Right lobe of liver (tissue), 6 donors: ENCODE measurements at regions of chr21 and their contacts with region 1.

Region 1: GRCh38 chr21:31180256-31181081 is 142.2 kb upstream of the KRTAP19-8 start:
- DNase-seq: no peak
- ATAC-seq: peak; percentile 67 to 79 (median 70)
- H3K4me3 ChIP-seq: no peak overlapping the region
- H3K27ac ChIP-seq: no peak overlapping the region
- H3K4me1 ChIP-seq: no peaks in the 10 kb centered on the region
- H3K27me3 ChIP-seq: no peaks in the 10 kb centered on the region
- CTCF ChIP-seq: peak; percentile 55 to 66 (median 62)
- POLR2A ChIP-seq: no peak

Region 2: GRCh38 chr21:31098576-31099005 is 81.9 kb before region 1 on chr21:
- intact Hi-C with region 1: loop called in 1 of 2 experiments (anchors 10 kb)
- DNase-seq: peak; percentile 66 to 75 (median 72)
- ATAC-seq: peak; percentile 91 to 97 (median 95)
- H3K4me3 ChIP-seq: no peak overlapping the region
- H3K27ac ChIP-seq: no peak overlapping the region
- H3K4me1 ChIP-seq: no peaks in the 10 kb centered on the region
- H3K27me3 ChIP-seq: no peaks in the 10 kb centered on the region
- CTCF ChIP-seq: peak; percentile 78 to 80 (median 80)
- POLR2A ChIP-seq: no peak